ENCODE measurements at regions of chr20 and their contacts with region 1.

Region 1: DNA sequence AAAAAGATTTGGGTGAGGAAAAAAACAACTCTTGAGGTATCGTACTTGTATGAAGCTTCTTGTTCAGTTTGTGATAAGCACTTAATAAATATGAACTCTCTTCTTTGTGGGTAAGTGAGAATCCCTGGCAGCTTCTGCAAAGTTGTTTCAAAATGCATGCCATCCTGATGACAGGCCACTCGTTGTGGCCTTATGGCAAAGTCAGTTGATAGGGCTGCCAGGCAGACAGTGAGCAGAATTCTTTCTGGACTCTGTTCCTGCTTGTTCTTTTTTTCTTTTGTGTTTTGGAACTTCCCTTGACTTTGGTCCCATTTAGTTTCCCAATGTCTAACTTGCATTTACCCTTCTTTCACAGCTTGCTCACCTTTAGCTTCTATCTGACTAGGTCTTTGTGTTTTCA is 983.5 kb upstream of the FLRT3 start:
- DNase-seq: no peak
- H3K4me3 ChIP-seq: no peak overlapping the region
- H3K27ac ChIP-seq: no peak overlapping the region
- H3K4me1 ChIP-seq: no peaks in the 10 kb centered on the region
- H3K27me3 ChIP-seq: no peaks in the 10 kb centered on the region
- CTCF ChIP-seq: no peak

Region 2: GRCh38 chr20:15380770-15381169 is 59.8 kb after region 1 on chr20:
- intact Hi-C with region 1: loop called (anchors 10 kb)
- DNase-seq: no peak
- H3K4me3 ChIP-seq: no peak overlapping the region
- H3K27ac ChIP-seq: no peak overlapping the region
- H3K4me1 ChIP-seq: no peaks in the 10 kb centered on the region
- H3K27me3 ChIP-seq: no peaks in the 10 kb centered on the region
- CTCF ChIP-seq: no peak